MCF 10A (cell line): ENCODE measurements at regions of chr1 and their contacts with region 1.

Region 1: DNA sequence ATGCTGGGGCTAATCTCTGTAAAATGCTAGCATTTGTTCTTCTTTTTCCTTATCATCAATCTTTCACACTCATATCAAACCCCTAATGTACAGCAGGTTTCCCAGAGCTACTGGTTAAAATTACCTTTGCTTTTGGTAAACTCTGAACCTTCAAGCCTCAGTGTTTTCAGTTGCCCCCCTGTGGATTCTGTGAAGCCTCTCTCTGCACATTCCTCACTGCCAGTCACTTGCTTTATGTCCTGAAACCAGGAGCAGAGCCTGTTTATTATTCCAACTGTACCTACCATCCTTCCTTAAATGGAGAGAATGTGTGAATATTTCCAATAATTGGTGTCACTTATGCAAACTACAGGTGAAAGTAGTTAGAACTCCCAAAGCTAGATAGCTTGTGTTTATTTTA is 134.2 kb downstream of the NEK7 start:
- DNase-seq: no peak
- H3K4me3 Mint-ChIP-seq: no peak overlapping the region
- H3K27ac Mint-ChIP-seq: no peak overlapping the region
- H3K4me1 Mint-ChIP-seq: peaks cover 17% of the 10 kb centered on the region
- H3K27me3 Mint-ChIP-seq: no peaks in the 10 kb centered on the region
- CTCF ChIP-seq: no peak

Region 2: GRCh38 chr1:198275597-198275996 is 15.4 kb before region 1 on chr1:
- CTCF ChIA-PET with region 1: interaction called, 4 read pairs
- POLR2A ChIA-PET with region 1: interaction called, 26 read pairs
- intact Hi-C with region 1: no loop called
- DNase-seq: no peak
- H3K4me3 Mint-ChIP-seq: no peak overlapping the region
- H3K27ac Mint-ChIP-seq: no peak overlapping the region
- H3K4me1 Mint-ChIP-seq: peaks cover 5% of the 10 kb centered on the region
- H3K27me3 Mint-ChIP-seq: no peaks in the 10 kb centered on the region
- CTCF ChIP-seq: no peak

Region 3: GRCh38 chr1:198387587-198387986 is 96.6 kb after region 1 on chr1:
- CTCF ChIA-PET with region 1: no interaction called
- POLR2A ChIA-PET with region 1: no interaction called
- intact Hi-C with region 1: no loop called
- DNase-seq: no peak
- H3K4me3 Mint-ChIP-seq: no peak overlapping the region
- H3K27ac Mint-ChIP-seq: no peak overlapping the region
- H3K4me1 Mint-ChIP-seq: no peaks in the 10 kb centered on the region
- H3K27me3 Mint-ChIP-seq: no peaks in the 10 kb centered on the region
- CTCF ChIP-seq: no peak